Endothelial cell of umbilical vein (primary cell): ENCODE measurements at regions of chr11 and their contacts with region 1.

Region 1: DNA sequence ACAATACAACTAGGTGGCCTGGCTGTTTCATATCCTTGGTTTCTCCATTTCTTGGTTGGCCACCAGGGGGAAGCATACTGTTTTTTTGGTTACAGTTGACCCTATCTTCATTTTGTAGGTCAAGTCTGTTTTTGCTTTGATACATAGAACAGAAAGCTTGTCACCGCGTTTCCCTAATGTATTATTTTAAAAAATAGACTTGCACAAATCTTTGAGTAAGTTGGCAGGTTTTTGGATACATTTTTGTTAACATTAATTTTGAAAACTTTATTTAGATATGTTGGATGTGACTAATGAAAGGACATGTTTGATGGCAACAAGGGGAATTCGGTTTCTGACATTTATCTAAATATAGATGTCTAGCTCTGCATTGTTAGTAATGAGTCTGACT is 3.0 kb downstream of the NCR3LG1 start:
- DNase-seq: peak; percentile 77
- H3K4me3 ChIP-seq: peak overlapping the region in 1 of 3 experiments; percentile 85
- H3K27ac ChIP-seq: no peak overlapping the region
- H3K4me1 ChIP-seq: peaks cover 16% of the 10 kb centered on the region
- H3K27me3 ChIP-seq: no peaks in the 10 kb centered on the region
- CTCF ChIP-seq: peak; percentile 55 to 57
- POLR2A ChIP-seq: no peak

Region 2: GRCh38 chr11:16703795-16704194 is 650.8 kb before region 1 on chr11:
- CTCF ChIA-PET with region 1: no interaction called
- POLR2A ChIA-PET with region 1: no interaction called
- dilution Hi-C with region 1: no loop called
- intact Hi-C with region 1: no loop called
- DNase-seq: no peak
- H3K4me3 ChIP-seq: no peak overlapping the region
- H3K27ac ChIP-seq: no peak overlapping the region
- H3K4me1 ChIP-seq: no peaks in the 10 kb centered on the region
- H3K27me3 ChIP-seq: peaks cover 0 to 11% of the 10 kb centered on the region in 2 experiments
- CTCF ChIP-seq: no peak
- POLR2A ChIP-seq: no peak

Region 3: DNA sequence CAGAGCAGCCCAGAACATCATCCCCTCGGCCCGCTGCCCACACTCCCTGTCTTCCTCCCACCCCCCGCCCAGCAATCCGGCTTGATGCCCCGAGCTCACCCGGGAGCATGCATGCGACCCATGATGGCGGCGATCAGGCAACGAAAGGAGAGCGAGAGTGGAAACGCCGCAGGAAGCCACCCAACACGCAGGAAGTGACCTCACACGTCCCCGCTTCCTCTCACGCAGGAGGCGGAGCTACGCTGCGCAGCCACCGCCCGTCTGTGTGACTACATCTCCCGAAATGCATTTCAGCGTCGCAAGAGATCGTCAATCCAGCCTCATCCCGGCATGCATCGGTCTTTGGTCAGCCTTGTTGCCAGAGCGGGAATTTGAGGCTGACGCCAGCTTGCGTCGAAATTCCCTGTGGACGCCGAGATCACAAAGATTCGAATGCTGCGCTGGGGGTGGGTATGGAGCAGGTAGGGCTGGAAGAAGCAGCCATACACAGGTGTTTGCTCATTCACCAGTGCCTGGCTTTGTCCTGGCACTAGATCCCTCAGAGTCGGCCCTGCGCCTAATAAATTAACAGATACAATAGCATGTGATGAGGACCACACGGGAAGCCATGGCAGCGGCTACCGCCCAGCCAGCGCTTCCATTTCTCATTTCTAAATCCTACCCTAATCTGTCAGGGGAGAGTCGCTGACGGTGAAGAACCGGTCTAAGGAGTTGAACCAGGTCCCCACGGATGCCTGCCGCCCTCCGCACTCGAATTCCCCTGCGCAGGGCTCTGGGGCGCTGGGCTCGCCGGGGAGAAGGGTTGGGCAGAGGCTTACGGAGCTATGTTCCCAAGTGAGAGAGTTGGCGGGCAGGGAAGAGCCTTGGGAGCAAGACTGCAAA is 276.8 kb before region 1 on chr11 and contains the start of gene RPS13:
- CTCF ChIA-PET with region 1: interaction called, 3 read pairs
- POLR2A ChIA-PET with region 1: interaction called, 4 read pairs
- dilution Hi-C with region 1: no loop called
- intact Hi-C with region 1: loop called (anchors 2 kb)
- DNase-seq: peak; percentile 100
- H3K4me3 ChIP-seq: peak within 1 kb of the TSS; percentile 69 to 90 (median 83)
- H3K27ac ChIP-seq: peak within 1 kb of the TSS; percentile 76
- H3K4me1 ChIP-seq: peaks cover 14% of the 10 kb centered on the region
- H3K27me3 ChIP-seq: no peaks in the 10 kb centered on the region
- CTCF ChIP-seq: no peak
- POLR2A ChIP-seq: peak; percentile 99
- total RNA-seq, gene RPS13: 1,051 and 1,169 TPM in 2 replicates

Region 4: DNA sequence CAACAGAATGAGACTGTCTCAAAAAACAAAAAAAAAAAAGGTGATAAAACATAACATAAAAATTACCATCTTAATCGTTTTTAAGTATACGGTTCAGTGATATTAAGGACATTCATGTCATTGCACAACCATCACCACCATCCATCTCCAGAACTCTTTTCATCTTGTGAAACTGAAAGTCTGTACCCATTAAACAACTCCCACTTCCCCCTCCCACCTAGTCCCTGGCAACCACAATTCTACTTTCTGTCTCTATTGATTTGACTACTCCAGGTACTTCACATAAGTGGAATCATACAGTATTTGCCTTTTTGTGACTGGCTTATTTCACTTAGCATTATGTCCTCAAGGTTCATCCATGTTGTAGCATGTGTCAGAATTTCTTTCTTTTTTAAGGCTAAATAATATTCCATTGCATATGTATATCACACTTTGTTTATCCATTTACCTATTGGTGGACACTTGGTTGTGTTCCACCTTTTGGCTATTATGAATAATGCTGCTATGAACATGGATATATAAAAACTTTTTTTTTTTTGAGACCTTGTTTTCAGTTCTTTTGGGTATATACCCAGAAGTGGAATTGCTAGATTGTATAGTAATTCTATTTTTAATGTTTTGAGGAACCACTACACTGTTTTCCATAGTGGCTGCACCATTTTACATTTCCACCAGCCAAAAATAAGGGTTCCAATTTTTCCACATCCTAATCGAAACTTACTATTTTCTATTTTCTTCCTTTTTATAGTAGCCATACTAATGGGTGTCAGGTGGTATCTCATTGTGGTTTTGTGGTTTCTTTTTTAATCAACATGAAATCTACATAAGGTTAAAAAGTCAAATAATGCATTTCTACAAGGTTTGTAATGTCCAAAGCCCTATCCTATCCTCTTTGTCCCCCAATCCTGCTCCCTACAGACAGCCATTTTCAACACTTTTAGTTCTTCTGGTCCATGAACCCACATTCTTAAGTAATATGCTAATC is 123.4 kb before region 1 on chr11:
- CTCF ChIA-PET with region 1: interaction called, 22 read pairs
- POLR2A ChIA-PET with region 1: no interaction called
- dilution Hi-C with region 1: no loop called
- intact Hi-C with region 1: loop called (anchors 1 kb)
- DNase-seq: no peak
- H3K4me3 ChIP-seq: no peak overlapping the region
- H3K27ac ChIP-seq: no peak overlapping the region
- H3K4me1 ChIP-seq: peaks cover 3% of the 10 kb centered on the region
- H3K27me3 ChIP-seq: no peaks in the 10 kb centered on the region
- CTCF ChIP-seq: no peak
- POLR2A ChIP-seq: no peak

Region 5: DNA sequence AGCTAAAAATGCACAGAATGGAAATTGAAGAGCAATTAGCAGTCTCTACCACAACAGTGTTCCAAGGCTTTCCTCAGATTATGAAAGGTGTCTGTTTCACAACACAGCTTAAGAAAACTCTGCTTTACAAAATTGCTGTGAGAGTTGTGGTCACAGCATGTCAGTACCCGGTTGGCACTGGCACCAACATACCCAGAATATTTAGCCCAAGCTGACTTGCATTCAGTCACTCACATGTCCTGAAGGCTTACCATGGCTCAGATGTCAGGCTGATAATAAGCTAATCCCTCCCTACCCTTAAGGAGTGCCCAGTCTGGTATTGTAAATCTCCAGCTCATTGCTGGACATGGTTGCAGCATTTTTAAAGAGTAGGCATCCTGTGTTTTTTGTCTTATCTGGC is 11.9 kb after region 1 on chr11:
- CTCF ChIA-PET with region 1: interaction called, 26 read pairs
- POLR2A ChIA-PET with region 1: no interaction called
- dilution Hi-C with region 1: no loop called
- intact Hi-C with region 1: no loop called
- DNase-seq: no peak
- H3K4me3 ChIP-seq: no peak overlapping the region
- H3K27ac ChIP-seq: no peak overlapping the region
- H3K4me1 ChIP-seq: no peaks in the 10 kb centered on the region
- H3K27me3 ChIP-seq: no peaks in the 10 kb centered on the region
- CTCF ChIP-seq: no peak
- POLR2A ChIP-seq: no peak

Region 6: GRCh38 chr11:17405232-17406005 is 50.8 kb after region 1 on chr11:
- CTCF ChIA-PET with region 1: no interaction called
- POLR2A ChIA-PET with region 1: no interaction called
- dilution Hi-C with region 1: no loop called
- intact Hi-C with region 1: no loop called
- DNase-seq: no peak
- H3K4me3 ChIP-seq: no peak overlapping the region
- H3K27ac ChIP-seq: no peak overlapping the region
- H3K4me1 ChIP-seq: peaks cover 5% of the 10 kb centered on the region
- H3K27me3 ChIP-seq: no peaks in the 10 kb centered on the region
- CTCF ChIP-seq: no peak
- POLR2A ChIP-seq: no peak

Region 7: GRCh38 chr11:17423533-17424310 is 69.1 kb after region 1 on chr11:
- CTCF ChIA-PET with region 1: no interaction called
- POLR2A ChIA-PET with region 1: no interaction called
- dilution Hi-C with region 1: no loop called
- intact Hi-C with region 1: no loop called
- DNase-seq: no peak
- H3K4me3 ChIP-seq: no peak overlapping the region
- H3K27ac ChIP-seq: no peak overlapping the region
- H3K4me1 ChIP-seq: no peaks in the 10 kb centered on the region
- H3K27me3 ChIP-seq: peaks cover 2 to 10% of the 10 kb centered on the region in 2 experiments
- CTCF ChIP-seq: no peak
- POLR2A ChIP-seq: no peak

Region 8: DNA sequence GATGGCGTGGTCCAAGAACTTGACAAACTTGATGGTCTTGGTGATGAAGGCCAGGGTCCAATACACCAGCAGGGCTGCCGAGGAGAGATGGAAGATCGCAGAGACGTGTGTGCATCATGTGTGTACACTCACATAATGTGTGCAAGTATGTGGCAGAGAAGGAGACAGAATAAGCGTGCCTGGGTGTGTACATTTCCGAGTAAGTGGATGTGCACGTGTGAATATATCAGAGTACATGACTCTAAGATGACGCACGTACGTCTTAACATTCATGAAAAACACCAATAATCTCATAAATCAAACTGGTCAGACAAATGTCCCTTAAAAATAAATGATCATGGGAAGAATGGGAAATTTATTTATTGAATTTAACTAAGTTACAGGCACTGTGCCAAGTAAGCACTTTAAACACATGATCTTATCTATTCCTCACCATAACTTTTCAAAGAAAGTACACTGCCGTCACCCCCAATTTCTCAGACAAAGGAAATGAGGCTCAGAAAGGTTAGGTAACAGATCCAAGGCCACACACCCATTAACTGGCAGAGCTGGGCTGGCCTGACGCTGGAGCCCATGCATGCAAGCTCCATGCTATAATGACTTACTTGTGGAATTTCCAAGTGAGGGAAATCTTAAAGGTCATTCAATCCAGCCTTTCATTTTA is 109.1 kb after region 1 on chr11:
- CTCF ChIA-PET with region 1: no interaction called
- POLR2A ChIA-PET with region 1: no interaction called
- dilution Hi-C with region 1: no loop called
- intact Hi-C with region 1: no loop called
- DNase-seq: peak; percentile 16
- H3K4me3 ChIP-seq: no peak overlapping the region
- H3K27ac ChIP-seq: no peak overlapping the region
- H3K4me1 ChIP-seq: no peaks in the 10 kb centered on the region
- H3K27me3 ChIP-seq: peaks cover 0 to under 1% of the 10 kb centered on the region in 2 experiments
- CTCF ChIP-seq: no peak
- POLR2A ChIP-seq: no peak

Region 9: DNA sequence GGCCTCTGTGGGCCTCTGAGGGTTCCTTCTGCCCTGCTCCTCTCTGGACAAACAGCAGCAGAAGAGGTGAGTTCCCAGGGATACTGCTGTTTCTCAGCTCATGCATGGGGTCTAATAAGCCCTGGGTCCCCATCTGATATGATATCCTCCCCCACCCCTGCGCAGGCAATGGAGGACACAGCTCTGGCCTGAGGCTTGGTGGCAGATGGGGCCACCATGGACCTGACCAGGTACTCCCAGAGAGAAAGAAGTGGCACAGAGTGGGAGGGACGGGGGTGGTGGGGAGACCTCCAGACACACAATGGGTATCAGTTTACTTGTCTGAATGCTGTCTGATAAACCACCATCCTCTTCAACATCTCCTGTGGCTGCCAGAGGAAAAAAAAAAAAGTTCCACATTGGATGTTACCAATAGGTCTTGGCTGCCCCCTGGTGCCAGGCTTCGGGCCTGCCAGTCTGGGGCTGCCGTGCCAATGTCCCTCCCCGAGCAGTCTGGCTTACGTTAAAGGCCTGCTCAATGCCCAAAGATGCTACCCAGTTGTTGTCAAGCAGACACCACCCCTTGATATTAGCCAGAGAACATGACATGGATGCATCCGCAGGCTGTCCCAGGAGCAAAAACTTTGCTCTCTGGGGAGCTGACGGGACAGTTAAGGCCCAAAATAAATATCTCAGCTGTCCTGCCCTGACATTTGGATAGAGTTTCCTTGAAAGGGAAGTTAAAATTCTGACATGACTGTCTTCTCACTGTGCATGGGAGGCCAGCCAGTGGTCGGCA is 149.9 kb after region 1 on chr11:
- CTCF ChIA-PET with region 1: interaction called, 24 read pairs
- POLR2A ChIA-PET with region 1: no interaction called
- dilution Hi-C with region 1: no loop called
- intact Hi-C with region 1: loop called (anchors 1 kb)
- DNase-seq: peak; percentile 60
- H3K4me3 ChIP-seq: no peak overlapping the region
- H3K27ac ChIP-seq: no peak overlapping the region
- H3K4me1 ChIP-seq: no peaks in the 10 kb centered on the region
- H3K27me3 ChIP-seq: no peaks in the 10 kb centered on the region
- CTCF ChIP-seq: peak; percentile 78 to 90
- POLR2A ChIP-seq: no peak

Region 10: GRCh38 chr11:18395735-18396504 is 1041.3 kb after region 1 on chr11:
- CTCF ChIA-PET with region 1: no interaction called
- POLR2A ChIA-PET with region 1: no interaction called
- dilution Hi-C with region 1: no loop called
- intact Hi-C with region 1: loop called (anchors 5 kb)
- DNase-seq: peak; percentile 100
- H3K4me3 ChIP-seq: peak overlapping the region; percentile 42 to 80 (median 65)
- H3K27ac ChIP-seq: peak overlapping the region; percentile 56
- H3K4me1 ChIP-seq: peaks cover 18% of the 10 kb centered on the region
- H3K27me3 ChIP-seq: no peaks in the 10 kb centered on the region
- CTCF ChIP-seq: no peak
- POLR2A ChIP-seq: peak; percentile 83